ENCODE measurements at regions of chr17 and their contacts with region 1.

Region 1: DNA sequence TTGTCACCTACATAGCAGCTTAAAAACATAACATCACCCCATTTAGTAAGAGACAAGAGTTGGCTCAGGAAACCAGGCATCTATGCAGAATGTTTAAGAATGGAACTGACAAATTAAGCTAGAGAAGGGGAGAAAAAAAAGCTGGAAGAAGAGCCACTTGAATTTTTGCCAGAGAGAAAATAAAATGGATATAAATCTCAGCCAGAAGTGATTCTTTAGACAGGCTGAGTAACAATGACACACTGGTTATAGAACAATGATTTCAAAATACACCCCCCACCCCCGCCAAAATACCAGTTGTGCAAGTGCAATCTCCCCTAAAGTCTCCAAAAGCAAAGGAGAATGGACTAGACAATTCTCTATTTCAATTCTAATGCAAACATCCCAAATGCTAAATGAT is 22.4 kb downstream of the LSM12 start:
- DNase-seq: no peak
- H3K4me3 ChIP-seq: no peak overlapping the region
- H3K27ac ChIP-seq: 0 out of 4 replicates have a peak overlapping the region, but pooled peaks of 1 of the 2 experiments have one; percentile 5
- H3K4me1 ChIP-seq: peaks cover 0 to 7% of the 10 kb centered on the region in 2 experiments; a peak in 2 of 4 replicates
- H3K27me3 ChIP-seq: no peaks in the 10 kb centered on the region
- CTCF ChIP-seq: no peak
- EP300 ChIP-seq: no peak
- RAD21 ChIP-seq: no peak

Region 2: GRCh38 chr17:43868226-43868994 is 175.7 kb before region 1 on chr17:
- CTCF ChIA-PET with region 1: no interaction called
- POLR2A ChIA-PET with region 1: no interaction called
- DNase-seq: no peak
- H3K4me3 ChIP-seq: no peak overlapping the region
- H3K27ac ChIP-seq: no peak overlapping the region
- H3K4me1 ChIP-seq: no peaks in the 10 kb centered on the region; a peak in 1 of 4 replicates
- H3K27me3 ChIP-seq: no peaks in the 10 kb centered on the region; the same call in 1 of the 2 replicates
- CTCF ChIP-seq: no peak
- EP300 ChIP-seq: no peak
- RAD21 ChIP-seq: no peak

Region 3: DNA sequence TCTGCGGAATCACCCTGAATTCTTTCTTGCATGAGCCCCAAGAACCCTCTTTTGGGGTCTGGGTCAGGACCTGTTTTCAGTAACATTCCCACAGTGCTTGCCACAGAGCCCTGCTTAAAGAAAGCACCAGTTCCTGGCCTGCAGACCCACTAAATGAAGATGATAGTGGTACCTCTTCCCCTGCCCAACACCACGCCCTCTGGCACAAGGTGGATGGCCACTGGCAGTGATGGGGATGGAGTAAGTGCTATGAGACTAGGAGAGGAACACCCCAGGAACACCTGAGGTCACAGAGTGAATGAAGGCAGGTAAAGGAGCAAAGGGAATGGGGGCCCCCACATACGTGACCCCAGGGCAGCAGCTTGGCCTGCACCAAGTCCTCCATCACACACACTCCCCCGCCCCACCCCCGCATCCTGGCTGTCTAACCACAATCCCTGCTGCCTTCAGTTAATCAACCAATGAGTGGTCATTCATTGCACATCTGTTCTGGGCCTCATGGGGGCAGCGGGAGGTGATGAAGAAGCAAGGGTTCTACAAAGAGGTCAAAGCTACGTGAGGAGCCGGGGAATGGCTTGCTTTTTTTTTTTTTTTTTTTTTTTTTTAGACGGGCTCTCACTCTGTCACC is 97.9 kb before region 1 on chr17:
- CTCF ChIA-PET with region 1: interaction called, 24 read pairs
- POLR2A ChIA-PET with region 1: interaction called, 3 read pairs
- DNase-seq: no peak
- H3K4me3 ChIP-seq: no peak overlapping the region
- H3K27ac ChIP-seq: no peak overlapping the region
- H3K4me1 ChIP-seq: peaks cover 0 to 2% of the 10 kb centered on the region in 2 experiments; a peak in 1 of 4 replicates
- H3K27me3 ChIP-seq: no peaks in the 10 kb centered on the region
- CTCF ChIP-seq: no peak
- EP300 ChIP-seq: no peak
- RAD21 ChIP-seq: no peak

Region 4: GRCh38 chr17:44014437-44015172 is 29.5 kb before region 1 on chr17 and contains the start of gene TMEM101:
- CTCF ChIA-PET with region 1: interaction called, 17 read pairs
- POLR2A ChIA-PET with region 1: interaction called, 4 read pairs
- DNase-seq: peak; percentile 93
- H3K4me3 ChIP-seq: peak within 1 kb of the TSS; percentile 96 to 97
- H3K27ac ChIP-seq: peak within 1 kb of the TSS; percentile 68 to 92
- H3K4me1 ChIP-seq: peaks cover 0 to 32% of the 10 kb centered on the region in 2 experiments; a peak in 2 of 4 replicates
- H3K27me3 ChIP-seq: no peaks in the 10 kb centered on the region
- CTCF ChIP-seq: no peak
- EP300 ChIP-seq: peak in 1 of 2 experiments; percentile 24; a peak in 1 of 4 replicates
- RAD21 ChIP-seq: no peak
- polyA plus RNA-seq, gene TMEM101: 62.9 and 63.6 TPM in 2 replicates

Region 5: DNA sequence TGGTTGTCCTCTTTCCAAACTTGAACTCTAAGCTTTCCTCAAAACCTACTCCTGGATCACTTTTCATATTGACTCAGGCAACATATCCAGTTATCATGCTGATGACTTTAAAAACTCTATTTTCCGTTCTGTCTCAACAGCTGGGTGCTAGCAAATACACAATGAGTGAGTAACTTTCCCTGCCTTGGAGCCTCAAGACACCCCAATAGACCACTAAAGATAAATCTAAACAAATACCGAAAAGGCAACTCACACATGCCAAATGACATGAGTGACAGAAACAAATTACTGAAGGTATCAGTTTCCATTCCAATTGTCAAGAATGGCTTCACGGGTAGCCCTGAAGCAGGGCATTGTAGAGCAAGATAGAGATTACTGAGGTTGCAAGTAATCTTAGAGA is 13.6 kb before region 1 on chr17:
- CTCF ChIA-PET with region 1: interaction called, 26 read pairs
- POLR2A ChIA-PET with region 1: no interaction called
- DNase-seq: no peak
- H3K4me3 ChIP-seq: no peak overlapping the region
- H3K27ac ChIP-seq: no peak overlapping the region
- H3K4me1 ChIP-seq: peaks cover 0 to 3% of the 10 kb centered on the region in 2 experiments; a peak in 1 of 4 replicates
- H3K27me3 ChIP-seq: no peaks in the 10 kb centered on the region
- CTCF ChIP-seq: no peak
- EP300 ChIP-seq: no peak
- RAD21 ChIP-seq: no peak

Region 6: DNA sequence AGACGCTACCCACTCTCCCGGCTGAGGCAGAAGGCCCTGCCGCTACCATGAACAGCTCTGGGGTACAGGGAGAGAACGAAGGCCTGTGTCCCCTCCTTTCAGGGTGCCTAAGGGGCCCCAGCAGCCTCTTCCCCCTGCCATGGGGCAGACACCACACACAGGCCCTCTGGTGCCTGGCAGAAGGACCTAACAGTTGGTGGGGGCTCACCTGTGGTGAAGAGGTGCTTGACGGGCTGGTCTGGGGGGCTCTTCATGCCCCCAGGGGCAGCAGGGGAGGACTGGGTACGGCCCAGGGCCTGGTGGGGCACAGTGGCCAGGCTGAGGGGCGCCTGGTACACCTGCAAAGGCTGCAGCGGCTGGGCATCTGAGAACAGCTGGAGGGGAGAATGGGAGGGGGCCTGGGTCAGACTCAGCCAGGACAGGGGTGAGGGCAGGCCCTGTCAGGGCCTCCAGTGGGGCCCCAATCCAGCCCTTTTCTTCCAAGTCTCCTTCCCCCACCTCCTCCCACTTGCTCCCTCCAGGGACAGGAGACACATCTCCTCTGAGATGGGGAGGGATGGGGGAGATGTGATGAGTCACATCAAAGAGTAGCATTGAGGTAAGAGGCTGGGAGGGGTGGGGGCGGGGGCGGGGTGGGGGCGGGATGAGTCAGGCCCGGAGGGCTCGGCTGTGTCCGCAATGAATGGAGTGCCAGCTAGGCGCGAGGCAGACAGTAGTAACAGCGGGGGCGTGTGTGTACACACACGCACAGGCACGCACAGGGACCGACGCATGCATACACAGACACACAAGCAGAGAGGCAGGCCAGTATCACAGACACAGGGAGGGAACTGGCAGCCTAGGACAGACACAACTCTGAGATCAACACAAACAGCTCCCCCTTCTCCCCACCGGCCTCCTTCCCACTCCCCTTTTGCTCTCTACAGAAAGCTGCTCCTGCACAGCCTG is 42.6 kb after region 1 on chr17:
- CTCF ChIA-PET with region 1: interaction called, 12 read pairs
- POLR2A ChIA-PET with region 1: no interaction called
- DNase-seq: peak; percentile 81
- H3K4me3 ChIP-seq: no peak overlapping the region
- H3K27ac ChIP-seq: peak overlapping the region in 1 of 2 experiments; percentile 75; a peak in 3 of 4 replicates
- H3K4me1 ChIP-seq: peaks cover 12 to 15% of the 10 kb centered on the region in 2 experiments; a peak in 3 of 4 replicates
- H3K27me3 ChIP-seq: no peaks in the 10 kb centered on the region
- CTCF ChIP-seq: no peak
- EP300 ChIP-seq: no peak
- RAD21 ChIP-seq: no peak

Region 7: DNA sequence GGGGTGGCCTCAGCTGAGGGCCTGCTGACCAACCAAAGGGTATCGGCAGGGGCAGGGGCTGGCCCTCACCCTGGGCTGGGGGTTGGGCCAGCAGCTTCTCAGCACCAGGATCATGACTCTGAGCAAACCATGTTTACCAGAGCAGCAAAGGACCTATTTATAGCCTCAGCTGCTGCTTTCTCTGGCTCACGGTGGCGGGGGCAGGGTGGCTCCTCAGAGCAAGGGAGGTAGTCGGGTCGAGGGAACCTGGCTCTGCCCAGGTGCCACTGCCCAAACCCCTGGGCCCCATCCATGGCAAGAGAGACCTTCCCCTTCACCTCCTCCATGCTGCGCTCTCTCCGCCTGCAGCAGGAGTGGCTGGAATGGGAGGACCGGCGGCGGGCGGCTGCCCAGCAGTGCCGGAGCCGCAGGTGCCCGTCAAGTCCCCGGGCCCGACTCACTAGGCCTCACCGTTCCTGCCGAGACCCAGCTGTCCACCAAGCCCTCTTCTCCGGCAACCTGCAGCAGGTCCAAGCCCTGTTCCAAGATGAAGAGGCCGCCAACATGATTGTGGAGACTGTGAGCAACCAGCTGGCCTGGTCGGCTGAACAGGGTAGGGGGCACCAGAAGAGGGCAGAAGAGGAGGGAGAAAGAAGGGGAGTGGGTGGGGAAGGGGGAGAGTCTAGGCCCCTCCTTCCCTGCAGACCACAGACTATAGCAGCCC is 126.6 kb after region 1 on chr17 and contains the start of gene ASB16:
- CTCF ChIA-PET with region 1: interaction called, 10 read pairs
- POLR2A ChIA-PET with region 1: no interaction called
- DNase-seq: peak; percentile 48
- H3K4me3 ChIP-seq: no peak within 1 kb of the TSS
- H3K27ac ChIP-seq: no peak within 1 kb of the TSS
- H3K4me1 ChIP-seq: peaks cover 7 to 11% of the 10 kb centered on the region in 2 experiments; a peak in 1 of 4 replicates
- H3K27me3 ChIP-seq: no peaks in the 10 kb centered on the region
- CTCF ChIP-seq: no peak
- EP300 ChIP-seq: no peak
- RAD21 ChIP-seq: no peak
- polyA plus RNA-seq, gene ASB16: not detected in 2 replicates